ENCODE measurements at regions of chr12 and their contacts with region 1.

Region 1: GRCh38 chr12:25052196-25052913 is 103.5 kb upstream of the BCAT1 start:
- DNase-seq: peak in 8 of 9 donors; percentile 51 to 92 (median 87)
- ATAC-seq: peak; percentile 85
- H3K4me3 ChIP-seq: peak overlapping the region; percentile 94
- H3K4me3 Mint-ChIP-seq: peak overlapping the region; percentile 88 to 100 (median 95)
- H3K27ac ChIP-seq: peak overlapping the region; percentile 76
- H3K27ac Mint-ChIP-seq: peak overlapping the region; percentile 92 to 100 (median 99)
- H3K4me1 ChIP-seq: peaks cover 22 to 25% of the 10 kb centered on the region in 2 donors
- H3K4me1 Mint-ChIP-seq: peaks cover 29 to 50% (median 42%) of the 10 kb centered on the region in 7 donors
- H3K27me3 ChIP-seq: no peaks in the 10 kb centered on the region
- H3K27me3 Mint-ChIP-seq: peaks cover 0 to 3% (median 0%) of the 10 kb centered on the region in 5 donors

Region 2: DNA sequence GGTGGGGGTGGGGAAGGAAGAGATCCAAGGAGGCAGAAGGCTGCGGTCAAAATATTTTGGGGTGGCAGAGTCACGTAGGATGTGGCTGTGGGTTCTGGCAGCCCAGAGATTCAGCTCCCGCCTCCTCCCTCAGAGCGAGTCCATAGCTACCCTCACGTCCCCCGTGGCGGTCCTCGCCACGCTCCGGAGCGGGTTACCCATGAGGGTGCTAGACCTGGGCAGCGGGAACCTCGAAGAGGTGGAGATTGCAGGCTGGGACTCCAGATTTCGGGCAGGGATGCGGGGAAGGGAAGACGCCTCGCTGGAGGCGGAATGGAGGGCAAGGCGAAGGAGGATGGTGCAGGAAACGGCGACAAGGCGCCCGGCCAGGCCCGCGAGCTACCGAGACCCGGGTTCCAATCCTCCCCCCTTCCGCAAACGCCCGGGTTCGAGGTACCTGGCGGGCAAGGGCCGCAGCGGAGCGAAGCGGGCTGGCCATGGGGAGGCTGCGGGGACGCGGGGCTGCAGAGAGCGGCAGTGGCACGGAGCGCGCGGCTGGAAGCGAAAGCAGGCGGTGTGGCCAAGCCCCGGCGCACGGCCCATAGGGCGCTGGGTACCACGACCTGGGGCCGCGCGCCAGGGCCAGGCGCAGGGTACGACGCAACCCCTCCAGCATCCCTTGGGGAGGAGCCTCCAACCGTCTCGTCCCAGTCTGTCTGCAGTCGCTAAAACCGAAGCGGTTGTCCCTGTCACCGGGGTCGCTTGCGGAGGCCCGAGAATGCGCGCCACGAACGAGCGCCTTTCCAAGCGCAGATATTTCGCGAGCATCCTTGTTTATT is 149.6 kb before region 1 on chr12:
- CTCF ChIA-PET with region 1: no interaction called
- POLR2A ChIA-PET with region 1: no interaction called
- intact Hi-C with region 1: loop called in 1 of 2 experiments (anchors 1 kb)
- DNase-seq: peak in 3 of 9 donors; percentile 5 to 59 (median 7)
- ATAC-seq: peak; percentile 42
- H3K4me3 ChIP-seq: peak overlapping the region; percentile 37
- H3K4me3 Mint-ChIP-seq: peak overlapping the region in 9 of 10 donors; percentile 60 to 99 (median 78)
- H3K27ac ChIP-seq: no peak overlapping the region
- H3K27ac Mint-ChIP-seq: peak overlapping the region in 1 of 9 donors; percentile 96
- H3K4me1 ChIP-seq: no peaks in the 10 kb centered on the region
- H3K4me1 Mint-ChIP-seq: peaks cover 9 to 41% (median 16%) of the 10 kb centered on the region in 7 donors
- H3K27me3 ChIP-seq: no peaks in the 10 kb centered on the region
- H3K27me3 Mint-ChIP-seq: peaks cover 13 to 39% (median 35%) of the 10 kb centered on the region in 5 donors

Region 3: DNA sequence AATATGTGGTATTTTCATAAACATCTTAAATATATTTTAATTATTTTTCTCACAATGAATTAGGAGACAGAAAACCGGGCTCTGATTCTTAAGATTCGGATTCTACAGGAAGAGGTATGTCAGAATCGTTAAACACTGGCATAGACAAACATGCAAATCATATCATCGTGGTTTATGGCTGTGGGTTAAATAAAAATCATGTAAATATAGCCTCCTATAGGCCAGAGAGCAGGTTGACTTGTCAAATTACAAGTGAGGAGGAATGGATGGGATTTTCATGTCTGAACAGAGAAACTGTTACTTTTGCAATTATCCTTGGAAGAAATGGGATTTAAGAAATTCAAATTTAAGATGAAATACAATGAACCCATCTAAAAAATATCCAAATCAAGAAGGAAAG is 28.5 kb before region 1 on chr12:
- CTCF ChIA-PET with region 1: no interaction called
- POLR2A ChIA-PET with region 1: no interaction called
- intact Hi-C with region 1: loop called in 1 of 2 experiments (anchors 2 kb)
- DNase-seq: no peak
- ATAC-seq: no peak
- H3K4me3 ChIP-seq: no peak overlapping the region
- H3K4me3 Mint-ChIP-seq: no peak overlapping the region
- H3K27ac ChIP-seq: no peak overlapping the region
- H3K27ac Mint-ChIP-seq: no peak overlapping the region
- H3K4me1 ChIP-seq: no peaks in the 10 kb centered on the region
- H3K4me1 Mint-ChIP-seq: no peaks in the 10 kb centered on the region
- H3K27me3 ChIP-seq: no peaks in the 10 kb centered on the region
- H3K27me3 Mint-ChIP-seq: peaks cover 0 to 4% (median 0%) of the 10 kb centered on the region in 5 donors

Region 4: GRCh38 chr12:25089738-25090137 is 37.4 kb after region 1 on chr12:
- CTCF ChIA-PET with region 1: no interaction called
- POLR2A ChIA-PET with region 1: interaction called, 14 read pairs
- intact Hi-C with region 1: loop called in 1 of 2 experiments (anchors 5 kb)
- DNase-seq: no peak
- ATAC-seq: no peak
- H3K4me3 ChIP-seq: no peak overlapping the region
- H3K4me3 Mint-ChIP-seq: no peak overlapping the region
- H3K27ac ChIP-seq: no peak overlapping the region
- H3K27ac Mint-ChIP-seq: peak overlapping the region in 8 of 9 donors; percentile 5 to 81 (median 54)
- H3K4me1 ChIP-seq: no peaks in the 10 kb centered on the region
- H3K4me1 Mint-ChIP-seq: peaks cover 7 to 32% (median 16%) of the 10 kb centered on the region in 7 donors
- H3K27me3 ChIP-seq: no peaks in the 10 kb centered on the region
- H3K27me3 Mint-ChIP-seq: no peaks in the 10 kb centered on the region

Region 5: GRCh38 chr12:25250744-25251730 is 198.7 kb after region 1 on chr12 and contains the start of gene KRAS:
- CTCF ChIA-PET with region 1: no interaction called
- POLR2A ChIA-PET with region 1: interaction called, 3 read pairs
- intact Hi-C with region 1: loop called (anchors 1 to 2 kb)
- DNase-seq: peak; percentile 83 to 90 (median 90)
- ATAC-seq: peak; percentile 96
- H3K4me3 ChIP-seq: peak within 1 kb of the TSS; percentile 64
- H3K4me3 Mint-ChIP-seq: peak within 1 kb of the TSS; percentile 84 to 97 (median 94)
- H3K27ac ChIP-seq: peak within 1 kb of the TSS; percentile 91
- H3K27ac Mint-ChIP-seq: peak within 1 kb of the TSS; percentile 84 to 96 (median 94)
- H3K4me1 ChIP-seq: peaks cover 0 to 5% of the 10 kb centered on the region in 2 donors
- H3K4me1 Mint-ChIP-seq: peaks cover 16 to 51% (median 44%) of the 10 kb centered on the region in 7 donors
- H3K27me3 ChIP-seq: no peaks in the 10 kb centered on the region
- H3K27me3 Mint-ChIP-seq: peaks cover 0 to 20% (median 0%) of the 10 kb centered on the region in 5 donors
- total RNA-seq, gene KRAS: 33.1 to 39.9 (median 35.7) TPM

Region 6: GRCh38 chr12:26937875-26938700 is 1885.7 kb after region 1 on chr12 and contains the starts of genes FGFR1OP2 and INTS13:
- CTCF ChIA-PET with region 1: no interaction called
- POLR2A ChIA-PET with region 1: no interaction called
- intact Hi-C with region 1: loop called in 1 of 2 experiments (anchors 5 kb)
- DNase-seq: peak; percentile 82 to 96 (median 93)
- ATAC-seq: peak; percentile 95
- H3K4me3 ChIP-seq: peak within 1 kb of the TSS; percentile 96
- H3K4me3 Mint-ChIP-seq: peak within 1 kb of the TSS; percentile 87 to 99 (median 97)
- H3K27ac ChIP-seq: peak within 1 kb of the TSS; percentile 94
- H3K27ac Mint-ChIP-seq: peak within 1 kb of the TSS; percentile 91 to 99 (median 95)
- H3K4me1 ChIP-seq: peaks cover 32 to 35% of the 10 kb centered on the region in 2 donors
- H3K4me1 Mint-ChIP-seq: peaks cover 42 to 79% (median 68%) of the 10 kb centered on the region in 7 donors
- H3K27me3 ChIP-seq: no peaks in the 10 kb centered on the region
- H3K27me3 Mint-ChIP-seq: peaks cover 0 to 3% (median 0%) of the 10 kb centered on the region in 5 donors
- total RNA-seq, gene FGFR1OP2: 35.6 to 84.0 (median 79.0) TPM
- total RNA-seq, gene INTS13: 13.2 to 46.7 (median 19.0) TPM